Colonic mucosa (tissue), 4 donors: ENCODE measurements at regions of chr6 and their contacts with region 1.

Region 1: GRCh38 chr6:56595490-56596122 is 47.1 kb downstream of the DST start:
- DNase-seq: peak; percentile 41
- H3K4me3 ChIP-seq: no peak overlapping the region
- H3K27ac ChIP-seq: no peak overlapping the region
- H3K4me1 ChIP-seq: no peaks in the 10 kb centered on the region
- H3K27me3 ChIP-seq: no peaks in the 10 kb centered on the region
- CTCF ChIP-seq: peak; percentile 22

Region 2: DNA sequence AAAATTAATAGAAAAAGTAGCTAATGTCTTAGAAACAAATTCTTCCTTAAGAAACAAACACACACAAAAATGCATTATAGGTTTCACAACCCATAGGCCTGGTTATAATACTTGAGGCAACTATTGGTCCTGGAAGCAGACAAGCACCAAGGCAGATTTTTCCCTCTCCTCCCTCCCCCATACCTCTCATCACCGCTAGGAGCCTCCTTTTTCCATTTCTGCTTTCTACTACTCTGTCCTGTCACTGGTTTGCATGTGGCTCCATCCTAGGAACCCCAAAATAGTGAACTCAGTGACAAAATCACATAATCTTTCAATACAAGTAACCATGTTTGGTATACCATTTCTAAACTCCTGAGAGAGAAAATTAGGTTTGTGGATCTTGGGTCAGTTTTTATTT is 1082.7 kb before region 1 on chr6:
- intact Hi-C with region 1: no loop called
- DNase-seq: no peak
- H3K4me3 ChIP-seq: no peak overlapping the region
- H3K27ac ChIP-seq: no peak overlapping the region
- H3K4me1 ChIP-seq: no peaks in the 10 kb centered on the region
- H3K27me3 ChIP-seq: no peaks in the 10 kb centered on the region
- CTCF ChIP-seq: no peak

Region 3: DNA sequence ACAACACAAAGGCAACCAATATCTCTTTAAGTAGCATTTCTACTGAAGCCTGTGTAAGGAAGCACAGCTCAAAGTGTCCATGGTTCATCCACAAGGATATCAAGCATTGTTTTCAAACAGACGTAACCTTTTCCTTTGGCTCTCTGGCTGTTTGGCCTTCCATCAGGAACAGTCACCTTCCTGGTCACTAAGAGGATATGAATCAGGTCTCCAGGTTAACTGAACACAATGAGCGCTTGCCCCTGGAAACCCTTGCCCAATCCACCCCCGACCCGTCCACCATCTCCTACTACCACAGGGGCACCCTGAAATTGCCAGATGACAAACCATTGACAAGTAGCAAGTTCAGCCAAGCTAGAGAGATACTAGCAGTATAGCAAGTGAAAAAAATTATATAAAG is 233.8 kb before region 1 on chr6:
- intact Hi-C with region 1: loop called (anchors 2 kb)
- DNase-seq: no peak
- H3K4me3 ChIP-seq: no peak overlapping the region
- H3K27ac ChIP-seq: no peak overlapping the region
- H3K4me1 ChIP-seq: no peaks in the 10 kb centered on the region
- H3K27me3 ChIP-seq: no peaks in the 10 kb centered on the region
- CTCF ChIP-seq: no peak